Mammary epithelial cell (primary cell): ENCODE measurements at regions of chr3 and their contacts with region 1.

Region 1: DNA sequence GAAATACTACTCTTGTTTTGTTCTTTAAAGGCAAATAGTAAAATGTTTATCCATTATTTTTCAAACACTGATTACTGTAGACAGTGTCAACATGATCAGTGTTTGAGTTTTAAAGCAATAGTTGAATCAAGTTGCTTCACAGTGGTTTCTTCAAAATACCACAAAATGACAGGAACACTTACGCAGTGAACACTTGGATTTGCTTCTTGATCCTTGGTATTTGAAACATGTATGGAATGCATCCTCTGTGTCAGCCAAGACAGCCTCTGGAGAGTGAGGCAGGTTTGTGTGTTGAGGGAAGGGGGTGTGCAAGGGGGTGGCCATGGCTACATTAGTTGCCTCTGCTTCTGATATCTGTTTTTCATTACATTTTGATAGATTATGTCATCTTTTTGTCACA is 413.0 kb downstream of the RBMS3 start:
- DNase-seq: peak; percentile 57
- H3K4me3 ChIP-seq: peak overlapping the region in 1 of 3 experiments; percentile 15
- H3K27ac ChIP-seq: peak overlapping the region; percentile 95
- H3K4me1 ChIP-seq: peaks cover 34% of the 10 kb centered on the region
- H3K27me3 ChIP-seq: no peaks in the 10 kb centered on the region
- CTCF ChIP-seq: no peak

Region 2: DNA sequence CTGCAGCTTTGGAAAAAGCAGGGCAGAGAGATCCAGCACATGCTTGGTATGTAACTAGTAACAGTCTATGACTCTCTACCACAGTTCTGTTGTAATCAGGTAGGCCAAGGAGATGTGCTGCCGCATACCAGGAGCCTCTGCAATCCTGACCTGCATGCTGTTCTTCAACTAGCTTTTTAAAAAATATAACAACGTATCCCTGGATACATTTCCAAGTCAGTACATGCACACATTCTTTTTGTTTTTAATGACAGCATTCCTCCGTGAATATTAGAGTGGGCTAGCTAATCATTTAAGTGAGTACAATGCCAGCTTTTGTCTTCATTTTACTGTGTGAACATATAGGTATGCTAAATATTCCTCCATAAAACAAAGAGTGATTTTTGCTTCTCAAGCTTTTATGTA is 24.8 kb after region 1 on chr3:
- CTCF ChIA-PET with region 1: no interaction called
- dilution Hi-C with region 1: no loop called
- in situ Hi-C with region 1: no loop called
- intact Hi-C with region 1: loop called (anchors 1 kb)
- DNase-seq: peak; percentile 91
- H3K4me3 ChIP-seq: no peak overlapping the region
- H3K27ac ChIP-seq: peak overlapping the region; percentile 89
- H3K4me1 ChIP-seq: peaks cover 21% of the 10 kb centered on the region
- H3K27me3 ChIP-seq: no peaks in the 10 kb centered on the region
- CTCF ChIP-seq: no peak

Region 3: GRCh38 chr3:30970183-30970582 is 1276.3 kb after region 1 on chr3:
- CTCF ChIA-PET with region 1: interaction called, 17 read pairs
- dilution Hi-C with region 1: no loop called
- in situ Hi-C with region 1: no loop called
- intact Hi-C with region 1: no loop called
- DNase-seq: peak; percentile 20
- H3K4me3 ChIP-seq: no peak overlapping the region
- H3K27ac ChIP-seq: no peak overlapping the region
- H3K4me1 ChIP-seq: peaks cover under 1% of the 10 kb centered on the region
- H3K27me3 ChIP-seq: no peaks in the 10 kb centered on the region
- CTCF ChIP-seq: peak; percentile 14 to 64